ENCODE measurements at regions of chr1 and their contacts with region 1.

Region 1: DNA sequence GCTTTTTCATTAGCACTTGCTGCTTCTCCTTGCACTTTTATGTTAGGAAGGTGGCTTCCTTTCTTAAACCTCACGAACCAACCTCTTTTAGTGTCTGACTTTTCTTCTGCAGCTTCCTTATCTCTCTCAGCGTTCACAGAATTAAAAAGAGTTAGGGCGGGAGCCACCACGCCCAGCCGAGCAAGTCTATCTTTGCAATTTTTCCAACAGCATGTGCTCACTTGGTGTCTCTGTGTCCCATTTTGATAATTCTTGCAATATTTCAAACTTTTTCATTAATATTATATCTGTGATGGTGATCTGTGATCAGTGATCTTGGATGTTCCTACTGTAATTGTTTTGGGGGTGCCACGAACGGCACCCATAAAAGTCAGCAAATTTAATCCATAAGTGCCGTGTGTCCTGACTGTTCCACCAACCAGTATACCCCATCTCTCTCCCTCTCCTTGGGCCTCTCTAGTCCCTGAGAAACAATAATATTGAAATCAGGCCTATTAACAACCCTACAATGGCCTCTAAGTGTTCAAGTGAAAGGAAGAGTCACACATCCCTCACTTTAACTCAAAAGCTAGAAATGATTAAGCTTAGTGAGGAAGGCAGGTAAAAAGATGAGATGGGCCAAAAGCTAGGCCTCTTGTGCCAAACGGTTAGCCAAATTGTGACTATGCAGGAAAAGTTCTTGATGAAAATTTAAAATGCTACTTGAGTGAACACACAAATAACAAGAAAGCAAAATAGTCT is 15.9 kb upstream of the ITPKB start:
- DNase-seq: no peak
- ATAC-seq: no peak
- H3K4me3 ChIP-seq: no peak overlapping the region
- H3K27ac ChIP-seq: no peak overlapping the region
- H3K4me1 ChIP-seq: no peaks in the 10 kb centered on the region
- H3K27me3 ChIP-seq: no peaks in the 10 kb centered on the region
- CTCF ChIP-seq: no peak

Region 2: GRCh38 chr1:226790545-226791181 is 35.7 kb after region 1 on chr1:
- intact Hi-C with region 1: loop called in 1 of 2 experiments (anchors 5 kb)
- DNase-seq: no peak
- ATAC-seq: no peak
- H3K4me3 ChIP-seq: no peak overlapping the region
- H3K27ac ChIP-seq: no peak overlapping the region
- H3K4me1 ChIP-seq: no peaks in the 10 kb centered on the region
- H3K27me3 ChIP-seq: no peaks in the 10 kb centered on the region
- CTCF ChIP-seq: no peak

Measured in psoas muscle (tissue), 8 donors.